Transverse colon (tissue), 4 donors: ENCODE measurements at regions of chr6 and their contacts with region 1.

Region 1: DNA sequence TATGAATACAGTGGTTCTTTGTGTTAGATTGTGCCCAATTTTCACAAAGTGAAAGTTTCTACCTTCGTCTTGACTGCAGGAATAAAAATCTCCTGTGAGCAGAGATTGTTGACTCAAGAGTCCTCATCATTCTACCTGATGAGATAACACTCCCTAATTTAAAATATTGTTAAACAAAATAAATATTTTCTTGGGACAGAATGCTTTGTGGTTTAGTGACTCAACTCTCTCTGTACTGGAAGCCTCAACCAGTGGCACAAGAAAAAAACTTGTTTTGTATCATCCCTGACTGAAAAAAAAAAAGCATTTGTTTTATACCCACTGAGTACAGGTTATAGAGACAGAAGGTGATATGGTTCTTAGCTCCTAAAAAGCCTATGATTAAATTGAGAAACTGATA is 78.9 kb downstream of the CRYBG1 start:
- DNase-seq: no peak
- H3K4me3 ChIP-seq: no peak overlapping the region
- H3K27ac ChIP-seq: no peak overlapping the region
- H3K4me1 ChIP-seq: peaks cover 0 to 14% (median 1%) of the 10 kb centered on the region in 4 donors
- H3K27me3 ChIP-seq: peaks cover 9% of the 10 kb centered on the region
- CTCF ChIP-seq: no peak
- EP300 ChIP-seq: no peak
- POLR2A ChIP-seq: no peak

Region 2: DNA sequence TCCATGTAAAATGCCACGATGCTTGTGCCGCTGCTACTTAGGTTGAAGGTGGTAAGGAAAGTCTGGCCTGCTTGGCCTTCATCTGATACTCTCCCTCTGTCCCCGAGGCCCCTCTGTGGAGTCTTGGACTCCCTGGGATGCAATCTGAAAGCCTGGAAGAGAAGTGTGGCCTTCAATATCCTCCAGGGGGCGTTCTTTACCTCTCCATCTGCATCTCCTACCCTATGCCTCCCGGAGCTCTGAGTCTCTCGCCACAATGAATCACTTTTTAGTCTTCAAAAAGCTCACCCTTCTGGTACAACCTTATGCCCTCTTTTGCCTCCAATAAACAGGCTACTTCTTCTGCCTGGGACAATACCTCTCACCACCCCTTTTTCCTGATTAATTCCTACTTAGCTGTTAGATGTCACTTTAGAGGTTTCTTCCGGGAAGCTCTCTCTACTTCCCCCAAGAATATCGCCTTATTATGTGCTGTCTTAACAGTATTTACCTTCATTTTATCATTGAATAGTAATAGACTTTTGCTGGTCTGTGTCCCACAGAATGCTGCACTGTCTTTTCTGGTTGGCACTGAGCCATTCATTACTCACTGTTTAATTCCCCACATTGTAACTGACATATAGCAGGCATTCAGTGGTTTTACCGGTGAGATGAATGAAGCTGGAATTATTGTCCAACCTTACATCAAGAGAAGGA is 100.0 kb before region 1 on chr6:
- in situ Hi-C with region 1: loop called in 2 of 4 experiments (anchors 10 kb)
- intact Hi-C with region 1: no loop called
- DNase-seq: peak; percentile 49
- H3K4me3 ChIP-seq: no peak overlapping the region
- H3K27ac ChIP-seq: no peak overlapping the region
- H3K4me1 ChIP-seq: peaks cover 0 to 3% (median 1%) of the 10 kb centered on the region in 4 donors
- H3K27me3 ChIP-seq: no peaks in the 10 kb centered on the region
- CTCF ChIP-seq: peak; percentile 60 to 73 (median 70)
- EP300 ChIP-seq: no peak
- POLR2A ChIP-seq: no peak

Region 3: GRCh38 chr6:106461084-106461483 is 21.6 kb after region 1 on chr6:
- in situ Hi-C with region 1: no loop called
- intact Hi-C with region 1: no loop called
- DNase-seq: no peak
- H3K4me3 ChIP-seq: no peak overlapping the region
- H3K27ac ChIP-seq: no peak overlapping the region
- H3K4me1 ChIP-seq: peaks cover 0 to 22% (median 8%) of the 10 kb centered on the region in 4 donors
- H3K27me3 ChIP-seq: no peaks in the 10 kb centered on the region
- CTCF ChIP-seq: no peak
- EP300 ChIP-seq: no peak
- POLR2A ChIP-seq: no peak